ENCODE measurements at regions of chr17 and their contacts with region 1.

Region 1: DNA sequence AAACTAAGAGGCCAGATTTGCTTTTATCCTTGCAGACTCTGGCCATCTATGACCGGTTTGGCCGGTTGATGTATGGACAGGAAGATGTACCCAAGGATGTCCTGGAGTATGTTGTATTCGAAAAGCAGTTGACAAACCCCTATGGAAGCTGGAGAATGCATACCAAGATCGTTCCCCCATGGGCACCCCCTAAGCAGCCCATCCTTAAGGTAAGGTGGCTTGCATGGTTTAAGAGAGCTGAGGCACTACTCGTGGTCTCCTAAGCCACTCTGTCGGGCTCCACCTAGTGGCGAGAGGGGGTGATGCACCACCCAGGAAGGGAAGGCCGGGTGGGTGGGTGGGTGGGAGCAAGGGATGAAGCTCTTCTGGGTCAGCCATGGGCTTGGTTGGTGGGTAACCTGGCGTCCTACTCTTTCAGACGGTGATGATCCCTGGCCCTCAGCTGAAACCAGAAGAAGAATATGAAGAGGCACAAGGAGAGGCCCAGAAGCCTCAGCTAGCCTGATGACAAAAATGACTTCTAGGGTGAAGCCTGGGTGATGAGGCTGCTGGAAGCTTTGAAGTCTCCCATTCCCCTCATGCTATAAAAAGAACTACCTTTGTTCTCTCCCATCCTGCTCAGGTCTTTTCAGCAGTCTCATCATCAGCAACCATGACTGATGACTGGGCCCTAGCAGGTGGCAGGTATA is 21.5 kb downstream of the GPR179 start:
- DNase-seq: peak; percentile 77
- H3K4me3 Mint-ChIP-seq: no peak overlapping the region
- H3K27ac Mint-ChIP-seq: no peak overlapping the region
- H3K4me1 Mint-ChIP-seq: peaks cover 5% of the 10 kb centered on the region
- H3K27me3 Mint-ChIP-seq: no peaks in the 10 kb centered on the region

Region 2: DNA sequence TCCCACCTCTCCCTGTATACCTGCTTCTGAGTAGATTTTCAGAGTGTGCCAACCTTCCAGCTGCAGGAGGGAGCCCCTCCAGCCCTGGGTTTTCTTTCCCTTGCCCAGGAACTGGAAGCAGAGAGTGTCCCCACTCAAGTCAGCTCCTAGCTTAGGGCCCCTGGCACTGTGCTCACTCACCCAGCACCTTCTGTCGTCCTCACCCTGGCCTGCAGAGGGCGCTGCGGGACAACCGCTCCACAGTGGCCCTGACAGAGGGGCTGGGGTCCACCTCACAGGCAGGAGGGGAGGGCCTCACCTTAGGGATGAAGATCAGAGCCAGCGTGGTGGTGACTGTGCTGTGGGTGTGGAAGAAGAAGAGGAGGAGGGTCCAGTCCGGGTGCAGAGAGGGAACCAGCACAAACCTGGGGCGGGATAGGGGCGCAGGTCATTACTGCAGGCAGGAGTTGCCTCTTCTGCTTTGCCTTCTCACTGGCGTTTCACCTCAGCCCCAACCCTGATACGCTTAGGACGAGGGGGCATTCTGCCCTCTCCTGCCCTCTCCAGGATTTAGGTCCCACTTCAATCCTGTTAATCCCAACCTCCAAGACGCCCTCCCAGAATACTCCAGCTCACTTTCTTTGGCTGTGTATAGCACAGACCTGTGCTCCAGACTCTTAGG is 11.5 kb after region 1 on chr17:
- CTCF ChIA-PET with region 1: interaction called, 20 read pairs
- POLR2A ChIA-PET with region 1: no interaction called
- DNase-seq: peak; percentile 57
- H3K4me3 Mint-ChIP-seq: no peak overlapping the region
- H3K27ac Mint-ChIP-seq: no peak overlapping the region
- H3K4me1 Mint-ChIP-seq: no peaks in the 10 kb centered on the region
- H3K27me3 Mint-ChIP-seq: peaks cover 2% of the 10 kb centered on the region

Region 3: GRCh38 chr17:38444151-38444550 is 121.9 kb after region 1 on chr17:
- CTCF ChIA-PET with region 1: no interaction called
- POLR2A ChIA-PET with region 1: no interaction called
- DNase-seq: peak; percentile 51
- H3K4me3 Mint-ChIP-seq: no peak overlapping the region
- H3K27ac Mint-ChIP-seq: no peak overlapping the region
- H3K4me1 Mint-ChIP-seq: peaks cover 5% of the 10 kb centered on the region
- H3K27me3 Mint-ChIP-seq: peaks cover 6% of the 10 kb centered on the region

Measured in activated CD4-positive, alpha-beta T cell treated with anti-CD3 and anti-CD28 coated beads, Interleukin-2, amount 10 ng/mL, durations not matched to agents 7 days and 5 days (primary cell).